ENCODE measurements at regions of chr19 and their contacts with region 1.

Region 1: DNA sequence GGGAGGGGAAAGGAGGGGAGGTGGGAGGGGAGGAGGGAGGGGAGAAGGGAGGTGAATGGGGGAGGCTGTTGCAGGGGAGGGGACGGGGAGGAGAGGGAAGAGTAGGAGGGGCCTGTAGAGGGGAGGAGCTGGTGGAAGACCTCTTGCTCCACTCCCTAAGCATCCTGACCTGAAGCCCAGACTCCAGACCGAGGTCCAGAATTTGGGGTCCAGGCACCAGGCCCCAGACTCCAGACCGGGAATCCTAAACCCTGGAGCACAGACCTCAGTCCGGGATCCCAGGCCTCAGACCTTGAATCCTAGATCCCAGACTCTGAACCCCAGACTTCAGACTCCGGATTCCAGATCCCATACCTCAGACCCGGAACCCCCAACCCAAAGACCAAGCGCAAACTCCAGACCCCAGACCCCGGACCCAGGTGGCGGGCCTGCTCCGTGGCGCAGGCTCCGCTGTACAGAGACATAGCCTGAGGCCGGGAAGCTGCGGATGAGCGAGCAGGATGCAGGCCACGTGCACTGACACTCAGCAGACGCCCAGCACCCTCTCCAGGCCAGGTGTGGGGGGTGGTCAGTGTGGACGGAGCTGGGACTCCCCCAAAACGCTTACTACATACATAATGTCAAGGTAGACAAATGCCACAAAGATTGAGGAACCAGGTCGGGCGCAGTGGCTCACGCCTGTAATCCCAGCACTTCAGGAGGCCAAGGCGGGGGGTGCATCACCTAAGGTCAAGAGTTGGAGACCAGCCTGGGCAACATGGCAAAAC is 710 bp upstream of the BTBD2 start:
- DNase-seq: peak in 8 of 9 experiments; percentile 24 to 82 (median 57)
- ATAC-seq: peak; percentile 50
- H3K4me3 ChIP-seq: no peak overlapping the region
- H3K4me3 Mint-ChIP-seq: peak overlapping the region; percentile 63
- H3K27ac ChIP-seq: no peak overlapping the region
- H3K27ac Mint-ChIP-seq: no peak overlapping the region
- H3K4me1 ChIP-seq: peaks cover 15% of the 10 kb centered on the region
- H3K4me1 Mint-ChIP-seq: peaks cover 27% of the 10 kb centered on the region
- H3K27me3 ChIP-seq: no peaks in the 10 kb centered on the region
- H3K27me3 Mint-ChIP-seq: no peaks in the 10 kb centered on the region
- CTCF ChIP-seq: no peak

Region 2: GRCh38 chr19:1992759-1993260 is 23.4 kb before region 1 on chr19:
- CTCF ChIA-PET with region 1: no interaction called
- POLR2A ChIA-PET with region 1: no interaction called
- intact Hi-C with region 1: no loop called
- DNase-seq: peak in 3 of 9 experiments; percentile 21 to 50 (median 47)
- ATAC-seq: peak; percentile 38
- H3K4me3 ChIP-seq: no peak overlapping the region
- H3K4me3 Mint-ChIP-seq: no peak overlapping the region
- H3K27ac ChIP-seq: no peak overlapping the region
- H3K27ac Mint-ChIP-seq: no peak overlapping the region
- H3K4me1 ChIP-seq: no peaks in the 10 kb centered on the region
- H3K4me1 Mint-ChIP-seq: no peaks in the 10 kb centered on the region
- H3K27me3 ChIP-seq: no peaks in the 10 kb centered on the region
- H3K27me3 Mint-ChIP-seq: no peaks in the 10 kb centered on the region
- CTCF ChIP-seq: no peak

Region 3: DNA sequence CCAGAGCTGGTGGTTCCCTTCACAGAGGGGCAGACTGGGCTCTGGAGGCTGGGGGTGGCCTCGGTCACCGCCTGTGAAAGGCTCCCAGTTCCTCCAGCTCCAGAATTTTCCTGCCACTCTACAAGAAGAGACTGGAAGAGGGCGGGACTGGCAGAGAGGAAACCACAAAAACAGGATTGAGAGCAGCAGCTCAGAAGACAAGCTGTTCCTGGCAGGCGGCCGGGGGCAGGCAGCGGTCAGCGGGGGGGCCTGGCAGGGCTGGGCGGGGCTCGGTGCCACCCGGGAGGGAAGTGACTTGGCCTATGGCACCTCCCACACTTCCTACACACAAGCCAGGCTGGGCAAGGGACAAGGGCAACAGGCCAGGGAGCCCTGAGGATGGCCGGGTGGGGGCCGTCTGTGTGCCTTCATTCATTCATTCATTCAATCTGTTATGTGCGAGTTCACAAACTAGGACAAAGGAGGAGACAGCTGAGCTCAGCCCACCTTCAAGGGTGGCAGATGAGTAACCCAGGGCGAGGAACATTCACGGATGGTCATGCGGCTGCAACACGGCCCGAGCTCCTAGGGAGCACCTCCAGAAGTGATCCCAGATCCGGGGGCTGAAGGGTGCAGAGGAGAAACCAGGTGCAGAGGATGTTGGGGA is 16.2 kb after region 1 on chr19:
- CTCF ChIA-PET with region 1: interaction called, 11 read pairs
- POLR2A ChIA-PET with region 1: no interaction called
- intact Hi-C with region 1: no loop called
- DNase-seq: peak in 5 of 9 experiments; percentile 48 to 66 (median 57)
- ATAC-seq: no peak
- H3K4me3 ChIP-seq: peak overlapping the region in 1 of 2 experiments; percentile 27
- H3K4me3 Mint-ChIP-seq: peak overlapping the region; percentile 59
- H3K27ac ChIP-seq: peak overlapping the region in 1 of 2 experiments; percentile 31
- H3K27ac Mint-ChIP-seq: peak overlapping the region; percentile 76
- H3K4me1 ChIP-seq: peaks cover 39% of the 10 kb centered on the region
- H3K4me1 Mint-ChIP-seq: peaks cover 26% of the 10 kb centered on the region
- H3K27me3 ChIP-seq: no peaks in the 10 kb centered on the region
- H3K27me3 Mint-ChIP-seq: no peaks in the 10 kb centered on the region
- CTCF ChIP-seq: no peak

Region 4: GRCh38 chr19:2050991-2051772 is 35.0 kb after region 1 on chr19 and contains the start of gene MKNK2:
- CTCF ChIA-PET with region 1: interaction called, 8 read pairs
- POLR2A ChIA-PET with region 1: interaction called, 4 read pairs
- intact Hi-C with region 1: loop called in 1 of 2 experiments (anchors 2 kb)
- DNase-seq: peak; percentile 87 to 99 (median 94)
- ATAC-seq: peak; percentile 79
- H3K4me3 ChIP-seq: peak within 1 kb of the TSS; percentile 94 to 98
- H3K4me3 Mint-ChIP-seq: peak within 1 kb of the TSS; percentile 86
- H3K27ac ChIP-seq: peak within 1 kb of the TSS; percentile 78 to 94
- H3K27ac Mint-ChIP-seq: peak within 1 kb of the TSS; percentile 89
- H3K4me1 ChIP-seq: peaks cover 73% of the 10 kb centered on the region
- H3K4me1 Mint-ChIP-seq: peaks cover 46% of the 10 kb centered on the region
- H3K27me3 ChIP-seq: no peaks in the 10 kb centered on the region
- H3K27me3 Mint-ChIP-seq: no peaks in the 10 kb centered on the region
- CTCF ChIP-seq: peak; percentile 29
- total RNA-seq, gene MKNK2: 453 to 455 TPM

Region 5: GRCh38 chr19:2084993-2085720 is 68.9 kb after region 1 on chr19:
- CTCF ChIA-PET with region 1: interaction called, 21 read pairs
- POLR2A ChIA-PET with region 1: interaction called, 3 read pairs
- intact Hi-C with region 1: loop called in 1 of 2 experiments (anchors 5 kb)
- DNase-seq: peak; percentile 85 to 99 (median 94)
- ATAC-seq: peak; percentile 51
- H3K4me3 ChIP-seq: peak overlapping the region; percentile 73 to 82
- H3K4me3 Mint-ChIP-seq: peak overlapping the region; percentile 98
- H3K27ac ChIP-seq: peak overlapping the region; percentile 89 to 95
- H3K27ac Mint-ChIP-seq: peak overlapping the region; percentile 98
- H3K4me1 ChIP-seq: peaks cover 73% of the 10 kb centered on the region
- H3K4me1 Mint-ChIP-seq: peaks cover 76% of the 10 kb centered on the region
- H3K27me3 ChIP-seq: no peaks in the 10 kb centered on the region
- H3K27me3 Mint-ChIP-seq: no peaks in the 10 kb centered on the region
- CTCF ChIP-seq: no peak

Measured in CD8-positive, alpha-beta T cell (primary cell).